Calu3 (cell line): ENCODE measurements at regions of chr11 and their contacts with region 1.

Region 1: GRCh38 chr11:105202844-105203548 is 63.4 kb upstream of the CARD18 start:
- DNase-seq: peak; percentile 17
- H3K4me3 Mint-ChIP-seq: no peak overlapping the region
- H3K27ac Mint-ChIP-seq: peak overlapping the region; percentile 60
- H3K4me1 Mint-ChIP-seq: no peaks in the 10 kb centered on the region
- H3K27me3 Mint-ChIP-seq: no peaks in the 10 kb centered on the region
- CTCF ChIP-seq: no peak

Region 2: DNA sequence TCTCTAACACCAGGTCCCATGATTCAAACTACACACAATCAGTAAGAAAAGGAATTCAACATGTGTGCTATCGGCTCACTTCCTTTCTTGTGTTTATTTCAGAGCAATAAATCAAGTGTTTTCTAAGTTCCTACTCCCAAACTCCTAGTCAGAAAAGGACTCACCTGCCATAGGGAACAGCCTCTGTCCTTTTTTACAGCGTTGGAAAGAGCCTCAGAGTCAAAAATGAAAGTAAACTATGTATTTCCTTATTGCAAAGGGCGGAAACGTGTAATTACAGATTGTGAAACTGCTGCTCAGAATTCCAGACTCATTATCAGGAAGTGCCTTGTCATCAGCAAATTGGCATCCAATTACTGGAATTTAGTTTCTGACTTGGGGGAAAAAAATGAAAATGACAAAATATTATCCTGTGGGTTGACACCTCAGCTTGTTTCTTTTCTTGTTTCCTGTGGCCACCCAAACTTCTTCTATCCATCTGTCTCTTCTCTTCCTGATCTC is 234.6 kb before region 1 on chr11 and contains the start of gene CASP4:
- CTCF ChIA-PET with region 1: no interaction called
- intact Hi-C with region 1: loop called (anchors 10 kb)
- DNase-seq: peak; percentile 14
- H3K4me3 Mint-ChIP-seq: peak within 1 kb of the TSS; percentile 84
- H3K27ac Mint-ChIP-seq: peak within 1 kb of the TSS; percentile 86
- H3K4me1 Mint-ChIP-seq: peaks cover 33% of the 10 kb centered on the region
- H3K27me3 Mint-ChIP-seq: no peaks in the 10 kb centered on the region
- CTCF ChIP-seq: no peak
- total RNA-seq, gene CASP4: 53.1 and 67.7 TPM in 2 replicates

Region 3: DNA sequence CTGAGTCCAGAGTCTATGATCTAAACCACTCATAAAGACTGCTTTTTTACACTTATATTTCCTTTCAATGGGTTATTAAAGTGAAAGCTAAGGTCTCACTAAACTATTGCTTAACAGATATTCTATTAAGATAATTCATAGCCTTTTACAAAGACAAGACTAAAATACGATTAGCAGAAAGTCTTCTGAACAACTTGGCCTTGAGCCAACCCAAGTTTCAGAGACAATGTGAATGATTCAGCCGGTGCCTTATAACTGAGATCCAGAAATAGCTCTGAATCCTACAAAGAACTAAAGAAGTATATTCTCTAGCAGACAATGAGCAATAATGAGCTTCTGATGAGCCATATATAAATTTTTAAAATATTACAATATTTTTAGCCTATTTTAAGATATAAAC is 21.9 kb before region 1 on chr11:
- CTCF ChIA-PET with region 1: no interaction called
- intact Hi-C with region 1: no loop called
- DNase-seq: no peak
- H3K4me3 Mint-ChIP-seq: no peak overlapping the region
- H3K27ac Mint-ChIP-seq: no peak overlapping the region
- H3K4me1 Mint-ChIP-seq: no peaks in the 10 kb centered on the region
- H3K27me3 Mint-ChIP-seq: no peaks in the 10 kb centered on the region
- CTCF ChIP-seq: no peak